ENCODE measurements at regions of chr13 and their contacts with region 1.

Region 1: GRCh38 chr13:99200432-99201167 is at the start of gene UBAC2:
- DNase-seq: peak; percentile 96
- H3K4me3 Mint-ChIP-seq: peak within 1 kb of the TSS; percentile 81
- H3K27ac Mint-ChIP-seq: peak within 1 kb of the TSS; percentile 87
- H3K4me1 Mint-ChIP-seq: peaks cover 58% of the 10 kb centered on the region
- H3K27me3 Mint-ChIP-seq: peaks cover 3% of the 10 kb centered on the region

Region 2: GRCh38 chr13:99214232-99214631 is 13.6 kb after region 1 on chr13:
- CTCF ChIA-PET with region 1: interaction called, 13 read pairs
- DNase-seq: peak; percentile 31
- H3K4me3 Mint-ChIP-seq: peak overlapping the region; percentile 73
- H3K27ac Mint-ChIP-seq: peak overlapping the region; percentile 97
- H3K4me1 Mint-ChIP-seq: peaks cover 74% of the 10 kb centered on the region
- H3K27me3 Mint-ChIP-seq: no peaks in the 10 kb centered on the region

Region 3: DNA sequence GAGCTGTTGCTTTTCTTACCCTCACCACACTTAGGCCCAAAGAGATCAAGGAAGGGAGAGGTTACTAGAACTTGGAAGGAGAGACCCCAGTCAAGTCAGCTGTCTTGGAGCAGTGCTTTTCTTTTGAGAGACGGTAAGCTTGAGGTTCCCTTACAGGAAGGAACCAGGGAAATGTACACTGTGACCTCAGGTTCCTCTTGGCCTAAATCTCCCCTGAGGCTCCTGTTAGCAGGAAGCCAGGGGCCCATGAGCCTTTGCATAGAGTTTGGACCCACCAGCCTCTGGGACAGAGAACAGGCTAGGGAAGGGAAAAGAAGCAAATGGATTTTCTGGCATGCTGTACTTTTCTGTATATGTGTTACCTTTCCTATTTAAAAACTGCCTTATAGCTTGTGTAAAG is 63.5 kb after region 1 on chr13:
- CTCF ChIA-PET with region 1: interaction called, 35 read pairs
- DNase-seq: no peak
- H3K4me3 Mint-ChIP-seq: no peak overlapping the region
- H3K27ac Mint-ChIP-seq: peak overlapping the region; percentile 34
- H3K4me1 Mint-ChIP-seq: peaks cover 58% of the 10 kb centered on the region
- H3K27me3 Mint-ChIP-seq: no peaks in the 10 kb centered on the region

Measured in activated naive CD4-positive, alpha-beta T cell treated with anti-CD3 and anti-CD28 coated beads, Interleukin-2, amount 10 ng/mL, durations not matched to agents 7 days and 5 days (primary cell).